ENCODE measurements at regions of chr5 and their contacts with region 1.

Region 1: GRCh38 chr5:148730943-148731861 is 76.9 kb upstream of the HTR4 start:
- DNase-seq: peak; percentile 74
- H3K4me3 ChIP-seq: no peak overlapping the region
- H3K27ac ChIP-seq: no peak overlapping the region
- H3K4me1 ChIP-seq: no peaks in the 10 kb centered on the region
- H3K27me3 ChIP-seq: no peaks in the 10 kb centered on the region
- CTCF ChIP-seq: peak; percentile 58 to 95 (median 92)
- POLR2A ChIP-seq: no peak

Region 2: DNA sequence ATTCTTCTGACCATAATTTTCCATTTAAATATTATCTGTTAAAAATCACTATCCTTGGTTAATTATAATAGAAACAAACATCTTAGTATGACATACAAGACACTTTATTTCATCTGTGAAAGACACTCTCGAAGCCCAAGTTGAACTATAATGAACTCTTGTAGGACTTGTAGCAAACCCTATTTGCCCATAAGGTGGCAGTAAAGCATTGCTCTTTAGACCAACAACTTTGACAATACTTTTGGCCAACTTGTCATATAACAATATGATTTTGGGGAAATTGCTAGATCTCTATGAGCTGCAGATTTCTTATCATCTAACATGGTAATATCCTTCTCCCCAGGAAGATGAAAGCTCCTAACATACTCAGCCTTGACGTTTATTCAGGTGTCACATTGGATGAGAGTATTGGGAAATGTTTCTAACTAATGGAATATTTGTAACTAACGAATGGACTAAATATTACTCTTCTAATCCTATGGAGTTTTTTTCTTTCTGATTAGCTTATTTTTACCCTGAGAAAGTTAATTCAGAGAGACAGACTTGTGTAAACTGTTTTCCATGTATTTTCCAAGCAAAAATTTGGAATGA is 551.9 kb before region 1 on chr5:
- intact Hi-C with region 1: loop called (anchors 5 kb)
- DNase-seq: peak; percentile 28
- H3K4me3 ChIP-seq: no peak overlapping the region
- H3K27ac ChIP-seq: no peak overlapping the region
- H3K4me1 ChIP-seq: no peaks in the 10 kb centered on the region
- H3K27me3 ChIP-seq: no peaks in the 10 kb centered on the region
- CTCF ChIP-seq: peak; percentile 38 to 79 (median 66)
- POLR2A ChIP-seq: no peak

Region 3: DNA sequence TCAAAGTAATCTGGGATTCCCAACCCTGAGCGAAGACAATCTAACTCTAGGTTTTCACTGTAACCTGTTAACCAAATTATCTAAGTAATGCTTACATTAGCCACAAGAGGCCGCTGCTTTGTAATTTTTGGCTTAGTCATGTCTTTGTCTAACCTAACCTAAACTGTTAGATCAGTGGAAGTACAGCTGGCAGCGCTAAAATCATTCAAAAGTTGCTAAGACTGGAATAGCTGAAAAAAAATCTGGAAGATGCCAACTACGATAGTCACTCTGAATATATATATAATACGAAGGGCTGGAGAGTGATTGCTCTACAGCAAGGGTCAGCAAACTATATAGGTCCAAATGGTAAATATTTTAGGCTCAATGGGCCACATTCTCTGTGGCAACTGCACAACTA is 287.2 kb before region 1 on chr5:
- intact Hi-C with region 1: loop called (anchors 2 kb)
- DNase-seq: peak; percentile 49
- H3K4me3 ChIP-seq: no peak overlapping the region
- H3K27ac ChIP-seq: no peak overlapping the region
- H3K4me1 ChIP-seq: no peaks in the 10 kb centered on the region
- H3K27me3 ChIP-seq: no peaks in the 10 kb centered on the region
- CTCF ChIP-seq: peak; percentile 41 to 88 (median 84)
- POLR2A ChIP-seq: no peak

Region 4: DNA sequence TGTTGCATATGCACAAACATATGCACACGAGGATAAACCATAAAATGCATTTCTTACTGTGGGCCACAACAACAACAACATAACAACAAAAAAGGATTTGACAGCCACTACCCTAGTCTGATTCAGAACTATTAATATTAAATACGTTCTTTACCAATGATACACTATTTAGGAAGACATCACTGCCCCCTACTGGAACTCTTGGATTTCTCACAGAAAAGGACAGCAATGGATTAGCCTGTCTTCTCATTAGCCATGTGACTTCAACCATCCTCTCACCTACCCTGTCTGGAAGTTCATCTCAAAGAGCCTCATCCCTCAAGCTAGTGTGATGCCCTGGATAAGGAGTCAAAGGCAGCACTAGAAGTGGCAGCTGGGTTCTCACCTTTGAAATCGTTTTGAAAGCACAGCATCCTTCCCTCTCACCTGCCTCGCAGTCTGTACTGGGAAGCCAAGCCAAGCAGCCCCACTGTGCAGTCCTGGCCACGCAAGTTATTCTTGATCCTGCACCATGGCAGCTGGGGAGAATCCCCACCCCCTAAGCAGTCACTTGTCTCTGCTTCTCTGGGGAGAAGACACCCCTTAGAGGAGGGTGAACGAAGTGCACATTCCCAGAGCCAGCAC is 267.1 kb after region 1 on chr5:
- intact Hi-C with region 1: loop called (anchors 2 kb)
- DNase-seq: peak; percentile 77
- H3K4me3 ChIP-seq: no peak overlapping the region
- H3K27ac ChIP-seq: no peak overlapping the region
- H3K4me1 ChIP-seq: no peaks in the 10 kb centered on the region
- H3K27me3 ChIP-seq: no peaks in the 10 kb centered on the region
- CTCF ChIP-seq: peak in 3 of 4 experiments; percentile 70 to 82 (median 76)
- POLR2A ChIP-seq: no peak

Region 5: DNA sequence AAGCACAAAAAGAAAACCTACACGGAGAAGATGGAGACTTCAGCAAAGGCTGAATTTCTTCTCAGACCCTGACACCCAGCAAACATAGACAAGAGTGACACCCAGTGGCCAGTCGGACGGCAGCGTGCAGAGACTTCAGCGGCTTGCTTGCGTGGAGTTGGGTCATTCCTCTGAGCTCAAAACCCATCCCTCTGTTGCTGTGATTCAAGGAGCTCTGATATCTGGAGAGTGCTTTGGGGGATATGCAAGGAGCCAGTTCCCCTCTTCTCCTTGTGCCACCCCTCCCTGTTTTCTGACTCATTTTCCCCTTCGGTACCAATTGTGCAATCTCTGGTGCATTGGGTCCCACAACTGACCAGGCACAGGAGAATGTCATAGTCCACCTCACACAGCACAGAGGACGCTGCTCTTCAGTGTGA is 304.2 kb after region 1 on chr5:
- intact Hi-C with region 1: loop called (anchors 2 kb)
- DNase-seq: peak; percentile 63
- H3K4me3 ChIP-seq: no peak overlapping the region
- H3K27ac ChIP-seq: no peak overlapping the region
- H3K4me1 ChIP-seq: no peaks in the 10 kb centered on the region
- H3K27me3 ChIP-seq: no peaks in the 10 kb centered on the region
- CTCF ChIP-seq: peak; percentile 46 to 83 (median 78)
- POLR2A ChIP-seq: no peak

Region 6: DNA sequence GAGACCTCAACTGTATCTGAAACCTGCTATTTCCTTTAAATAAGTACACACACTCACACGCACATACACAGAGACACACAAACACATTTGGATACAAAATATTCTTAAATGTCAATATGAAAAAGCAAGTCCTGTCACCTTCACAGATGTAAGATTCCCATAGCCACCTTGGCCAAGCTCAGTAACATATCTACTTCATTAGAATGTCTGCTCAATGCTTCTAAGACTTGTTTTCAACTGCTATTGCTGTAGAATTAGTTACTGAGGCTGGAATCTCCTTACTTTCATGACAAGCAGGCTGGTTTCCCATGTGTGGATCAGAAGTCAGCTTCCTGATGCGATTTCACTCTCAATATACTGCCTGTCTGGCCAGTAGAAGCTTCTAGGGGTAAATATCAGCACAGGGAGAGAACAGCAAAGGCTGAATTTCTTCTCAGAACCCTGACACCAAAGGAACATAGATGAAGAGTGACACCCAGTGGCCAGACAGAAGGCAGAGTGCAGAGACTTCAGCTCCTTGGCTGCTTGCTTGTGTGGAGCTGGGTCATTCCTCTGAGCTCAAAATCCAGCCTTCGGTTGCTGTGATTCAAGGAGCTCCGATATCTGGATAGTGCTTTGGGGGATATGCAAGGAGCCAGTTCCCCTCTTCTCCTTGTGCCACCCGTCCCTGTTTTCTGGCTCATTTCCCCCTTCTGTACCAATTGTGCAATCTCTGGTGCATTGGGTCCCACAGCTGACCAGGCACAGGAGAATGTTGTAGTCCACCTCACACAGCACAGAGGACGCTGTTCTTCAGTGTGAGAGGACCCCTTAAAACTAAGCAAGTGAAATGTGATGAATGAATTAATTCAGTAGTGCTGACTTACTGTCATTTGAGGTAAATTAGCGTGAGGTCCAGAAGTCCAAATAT is 383.5 kb after region 1 on chr5:
- intact Hi-C with region 1: loop called (anchors 5 kb)
- DNase-seq: peak; percentile 68
- H3K4me3 ChIP-seq: no peak overlapping the region
- H3K27ac ChIP-seq: no peak overlapping the region
- H3K4me1 ChIP-seq: no peaks in the 10 kb centered on the region
- H3K27me3 ChIP-seq: no peaks in the 10 kb centered on the region
- CTCF ChIP-seq: peak; percentile 29 to 86 (median 65)
- POLR2A ChIP-seq: no peak

Measured in prostate gland (tissue), 2 donors.